Natural killer cell (primary cell): ENCODE measurements at regions of chr11 and their contacts with region 1.

Region 1: GRCh38 chr11:47980245-47981049 is at the start of gene PTPRJ:
- DNase-seq: peak; percentile 60 to 83
- ATAC-seq: peak; percentile 70 to 84 (median 79)
- H3K4me3 ChIP-seq: peak within 1 kb of the TSS; percentile 60
- H3K4me3 Mint-ChIP-seq: peak within 1 kb of the TSS; percentile 87
- H3K27ac ChIP-seq: peak within 1 kb of the TSS; percentile 52
- H3K27ac Mint-ChIP-seq: peak within 1 kb of the TSS; percentile 68 to 93
- H3K4me1 ChIP-seq: peaks cover 41% of the 10 kb centered on the region
- H3K4me1 Mint-ChIP-seq: peaks cover 34 to 39% of the 10 kb centered on the region in 2 donors
- H3K27me3 ChIP-seq: no peaks in the 10 kb centered on the region
- H3K27me3 Mint-ChIP-seq: no peaks in the 10 kb centered on the region
- CTCF ChIP-seq: no peak
- total RNA-seq, gene PTPRJ: 110 to 127 (median 111) TPM

Region 2: DNA sequence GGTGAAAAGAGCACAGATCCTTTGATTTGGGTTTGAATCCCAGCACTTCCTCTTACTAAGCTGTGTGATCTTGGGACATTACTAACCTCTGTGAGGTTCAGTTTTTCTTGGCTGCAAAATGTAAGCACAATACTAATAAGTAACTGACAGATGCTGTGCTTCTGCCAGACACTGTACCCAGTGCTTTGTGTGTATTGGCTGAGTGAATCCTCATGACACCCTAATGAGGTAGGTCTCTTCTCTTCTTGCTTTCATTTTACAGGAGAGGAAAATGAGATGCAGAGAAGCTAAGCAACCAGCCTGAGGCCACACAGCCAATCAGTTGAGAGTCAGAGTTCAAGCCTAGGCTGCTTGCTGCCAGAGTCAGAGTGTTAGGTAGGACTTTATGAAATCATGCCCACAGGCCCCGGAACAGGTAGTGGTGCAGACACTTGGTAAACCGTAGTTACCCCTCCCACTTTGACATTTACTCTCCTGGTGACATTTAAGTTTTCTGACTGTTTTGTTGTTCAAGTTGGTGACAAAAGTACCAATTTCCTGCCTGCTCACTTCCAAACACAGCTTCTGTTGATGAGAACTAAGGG is 21.1 kb after region 1 on chr11:
- intact Hi-C with region 1: loop called (anchors 1 kb)
- DNase-seq: peak; percentile 76 to 96
- ATAC-seq: peak; percentile 85 to 96 (median 93)
- H3K4me3 ChIP-seq: no peak overlapping the region
- H3K4me3 Mint-ChIP-seq: peak overlapping the region; percentile 88
- H3K27ac ChIP-seq: peak overlapping the region; percentile 90
- H3K27ac Mint-ChIP-seq: peak overlapping the region; percentile 95 to 97
- H3K4me1 ChIP-seq: peaks cover 87% of the 10 kb centered on the region
- H3K4me1 Mint-ChIP-seq: peaks cover 73 to 81% of the 10 kb centered on the region in 2 donors
- H3K27me3 ChIP-seq: no peaks in the 10 kb centered on the region
- H3K27me3 Mint-ChIP-seq: no peaks in the 10 kb centered on the region
- CTCF ChIP-seq: no peak

Region 3: DNA sequence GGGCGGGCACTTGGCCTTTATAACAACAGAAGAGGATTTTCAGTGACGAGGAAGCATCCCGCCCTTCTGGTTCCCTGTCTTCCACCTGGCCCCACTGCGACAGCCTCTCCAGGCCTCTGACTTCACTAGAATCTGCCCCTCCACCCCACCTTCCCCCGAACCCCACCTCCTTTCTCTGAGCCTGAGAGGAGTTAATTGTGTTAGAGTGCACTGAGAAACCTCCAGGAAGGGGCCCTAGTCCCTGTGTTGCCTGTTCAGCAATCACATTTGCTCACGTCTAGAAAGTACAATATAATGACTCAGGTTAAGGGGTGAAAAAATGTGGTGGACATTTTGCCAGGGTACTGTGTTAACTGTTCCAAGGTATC is 38.8 kb after region 1 on chr11:
- intact Hi-C with region 1: loop called (anchors 5 kb)
- DNase-seq: peak in 1 of 2 donors; percentile 43
- ATAC-seq: peak; percentile 24 to 54 (median 45)
- H3K4me3 ChIP-seq: no peak overlapping the region
- H3K4me3 Mint-ChIP-seq: peak overlapping the region; percentile 25
- H3K27ac ChIP-seq: peak overlapping the region; percentile 72
- H3K27ac Mint-ChIP-seq: peak overlapping the region; percentile 99
- H3K4me1 ChIP-seq: peaks cover 80% of the 10 kb centered on the region
- H3K4me1 Mint-ChIP-seq: peaks cover 71 to 82% of the 10 kb centered on the region in 2 donors
- H3K27me3 ChIP-seq: no peaks in the 10 kb centered on the region
- H3K27me3 Mint-ChIP-seq: no peaks in the 10 kb centered on the region
- CTCF ChIP-seq: no peak

Region 4: GRCh38 chr11:48055292-48056132 is 75.1 kb after region 1 on chr11:
- intact Hi-C with region 1: loop called (anchors 5 kb)
- DNase-seq: peak; percentile 50 to 81
- ATAC-seq: peak; percentile 66 to 78 (median 69)
- H3K4me3 ChIP-seq: no peak overlapping the region
- H3K4me3 Mint-ChIP-seq: peak overlapping the region; percentile 57
- H3K27ac ChIP-seq: peak overlapping the region; percentile 51
- H3K27ac Mint-ChIP-seq: peak overlapping the region; percentile 89 to 90
- H3K4me1 ChIP-seq: peaks cover 76% of the 10 kb centered on the region
- H3K4me1 Mint-ChIP-seq: peaks cover 85 to 88% of the 10 kb centered on the region in 2 donors
- H3K27me3 ChIP-seq: no peaks in the 10 kb centered on the region
- H3K27me3 Mint-ChIP-seq: no peaks in the 10 kb centered on the region
- CTCF ChIP-seq: no peak